Activated CD4-positive, alpha-beta memory T cell treated with anti-CD3 and anti-CD28 coated beads, Interleukin-2, amount 10 ng/mL, durations not matched to agents 7 days and 5 days (primary cell): ENCODE measurements at regions of chr14 and their contacts with region 1.

Region 1: DNA sequence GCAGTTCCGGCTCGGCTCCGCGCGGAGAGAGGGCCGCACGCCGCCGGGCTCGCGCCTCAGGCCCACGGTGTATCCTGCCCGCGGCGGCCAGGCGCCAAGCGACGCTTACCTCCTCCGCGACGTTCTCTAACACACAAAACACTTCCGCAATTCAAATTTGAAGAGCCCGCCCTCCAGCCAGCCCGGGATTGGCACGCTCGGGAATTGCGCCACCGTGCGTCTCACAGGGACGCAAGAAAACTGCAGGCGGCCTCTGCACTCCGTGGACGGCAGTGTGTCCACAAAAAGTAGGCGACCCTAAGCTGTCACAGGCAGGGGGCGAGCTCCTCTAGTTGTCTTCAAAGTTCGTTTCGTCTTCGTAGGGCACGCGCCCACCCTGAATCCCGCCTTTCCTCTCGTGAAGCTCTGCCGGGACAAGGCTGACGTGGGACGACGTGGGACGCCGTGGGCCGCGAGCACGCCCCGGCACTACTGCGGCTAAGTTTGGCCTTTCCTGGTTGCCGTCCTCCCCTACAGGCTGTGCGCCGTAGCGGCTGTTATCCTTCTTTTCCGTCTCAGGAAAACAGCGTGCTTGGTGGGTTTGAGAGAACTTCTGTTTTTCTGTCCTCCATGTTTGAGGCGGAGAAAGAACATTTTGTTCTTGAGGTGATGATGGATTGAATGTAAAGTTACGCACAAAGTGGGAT is at the start of gene MIS18BP1:
- DNase-seq: peak; percentile 96
- H3K4me3 Mint-ChIP-seq: peak within 1 kb of the TSS; percentile 83
- H3K27ac Mint-ChIP-seq: peak within 1 kb of the TSS; percentile 90
- H3K4me1 Mint-ChIP-seq: peaks cover 29% of the 10 kb centered on the region
- H3K27me3 Mint-ChIP-seq: peaks cover 3% of the 10 kb centered on the region
- total RNA-seq, gene MIS18BP1: 66.3 to 66.9 TPM

Region 2: GRCh38 chr14:45065540-45065939 is 187.7 kb before region 1 on chr14:
- CTCF ChIA-PET with region 1: no interaction called
- POLR2A ChIA-PET with region 1: no interaction called
- DNase-seq: no peak
- H3K4me3 Mint-ChIP-seq: no peak overlapping the region
- H3K27ac Mint-ChIP-seq: no peak overlapping the region
- H3K4me1 Mint-ChIP-seq: peaks cover 6% of the 10 kb centered on the region
- H3K27me3 Mint-ChIP-seq: no peaks in the 10 kb centered on the region

Region 3: GRCh38 chr14:45083971-45084722 is 169.1 kb before region 1 on chr14 and contains the start of gene PRPF39:
- CTCF ChIA-PET with region 1: interaction called, 3 read pairs
- POLR2A ChIA-PET with region 1: interaction called, 15 read pairs
- DNase-seq: peak; percentile 96
- H3K4me3 Mint-ChIP-seq: peak within 1 kb of the TSS; percentile 95
- H3K27ac Mint-ChIP-seq: peak within 1 kb of the TSS; percentile 89
- H3K4me1 Mint-ChIP-seq: peaks cover 50% of the 10 kb centered on the region
- H3K27me3 Mint-ChIP-seq: no peaks in the 10 kb centered on the region
- total RNA-seq, gene PRPF39: 35.6 to 42.7 TPM

Region 4: GRCh38 chr14:45128963-45129629 is 124.1 kb before region 1 on chr14:
- CTCF ChIA-PET with region 1: interaction called, 10 read pairs
- POLR2A ChIA-PET with region 1: interaction called, 53 read pairs
- DNase-seq: no peak
- H3K4me3 Mint-ChIP-seq: no peak overlapping the region
- H3K27ac Mint-ChIP-seq: no peak overlapping the region
- H3K4me1 Mint-ChIP-seq: peaks cover 19% of the 10 kb centered on the region
- H3K27me3 Mint-ChIP-seq: no peaks in the 10 kb centered on the region

Region 5: GRCh38 chr14:45134051-45134958 is 118.9 kb before region 1 on chr14 and contains the start of gene FKBP3:
- CTCF ChIA-PET with region 1: interaction called, 15 read pairs
- POLR2A ChIA-PET with region 1: interaction called, 53 read pairs
- DNase-seq: peak; percentile 96
- H3K4me3 Mint-ChIP-seq: peak within 1 kb of the TSS; percentile 90
- H3K27ac Mint-ChIP-seq: peak within 1 kb of the TSS; percentile 99
- H3K4me1 Mint-ChIP-seq: peaks cover 43% of the 10 kb centered on the region
- H3K27me3 Mint-ChIP-seq: no peaks in the 10 kb centered on the region
- total RNA-seq, gene FKBP3: 54.9 to 57.7 TPM

Region 6: DNA sequence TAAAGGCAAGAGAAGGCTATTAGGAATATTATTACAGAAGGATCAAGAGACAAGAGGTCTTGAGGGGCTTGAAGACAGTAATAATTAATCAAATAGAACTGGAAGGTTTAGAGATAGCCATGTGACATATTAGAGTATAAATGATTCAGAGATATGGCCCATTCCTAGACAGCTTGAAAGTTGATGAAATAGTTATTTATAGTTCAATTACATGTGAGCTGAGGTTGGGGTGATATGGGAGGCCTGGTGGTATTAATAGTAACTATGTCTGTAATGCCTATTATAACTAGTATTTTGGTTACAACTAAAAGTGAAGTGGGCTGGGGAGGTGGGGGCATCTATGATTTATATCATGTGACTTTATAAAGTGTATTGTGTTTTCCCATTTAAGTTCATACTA is 13.9 kb after region 1 on chr14:
- CTCF ChIA-PET with region 1: interaction called, 11 read pairs
- POLR2A ChIA-PET with region 1: interaction called, 3 read pairs
- DNase-seq: no peak
- H3K4me3 Mint-ChIP-seq: no peak overlapping the region
- H3K27ac Mint-ChIP-seq: no peak overlapping the region
- H3K4me1 Mint-ChIP-seq: no peaks in the 10 kb centered on the region
- H3K27me3 Mint-ChIP-seq: peaks cover 9% of the 10 kb centered on the region